Activated naive CD4-positive, alpha-beta T cell treated with anti-CD3 and anti-CD28 coated beads for 36 hours (primary cell): ENCODE measurements at regions of chr3 and their contacts with region 1.

Region 1: DNA sequence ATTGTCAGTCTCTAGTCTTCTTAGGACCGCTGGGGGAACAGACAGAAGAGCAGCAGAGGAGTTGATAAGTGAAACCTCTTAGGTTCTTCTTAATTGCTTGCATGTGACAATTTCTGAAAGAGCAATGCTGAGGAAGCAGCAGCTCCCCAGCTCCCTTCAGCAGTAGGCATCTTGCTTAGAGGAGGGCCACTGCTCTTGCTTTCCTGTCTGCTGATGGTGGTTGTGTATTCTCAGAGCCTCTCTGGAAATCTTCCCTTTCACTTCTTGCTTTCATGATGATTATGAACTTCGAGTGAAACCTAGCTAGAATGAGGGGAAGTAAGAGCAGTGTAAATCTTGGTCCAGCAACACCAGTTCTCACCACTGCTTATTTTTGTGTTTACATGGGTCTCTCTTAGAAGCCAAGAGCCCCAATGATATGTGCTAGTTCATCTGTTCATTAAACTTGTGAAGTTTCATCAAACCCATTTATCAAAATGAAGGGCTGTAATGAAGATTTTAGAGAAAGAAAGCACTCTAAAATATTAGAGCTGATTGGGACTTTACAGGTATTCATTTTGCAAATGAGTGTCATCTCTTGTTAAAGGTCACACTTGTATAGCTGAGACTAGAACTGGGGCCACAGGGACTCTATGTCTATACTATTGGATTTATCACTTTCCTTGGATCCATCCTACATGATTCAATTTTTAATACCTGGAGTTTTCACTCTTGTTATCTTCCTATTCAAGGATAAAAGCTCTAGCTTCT is 246.7 kb downstream of the LPP start:
- DNase-seq: peak; percentile 60
- H3K4me3 Mint-ChIP-seq: no peak overlapping the region
- H3K27ac Mint-ChIP-seq: peak overlapping the region; percentile 43
- H3K4me1 Mint-ChIP-seq: peaks cover 70% of the 10 kb centered on the region
- H3K27me3 Mint-ChIP-seq: no peaks in the 10 kb centered on the region

Region 2: DNA sequence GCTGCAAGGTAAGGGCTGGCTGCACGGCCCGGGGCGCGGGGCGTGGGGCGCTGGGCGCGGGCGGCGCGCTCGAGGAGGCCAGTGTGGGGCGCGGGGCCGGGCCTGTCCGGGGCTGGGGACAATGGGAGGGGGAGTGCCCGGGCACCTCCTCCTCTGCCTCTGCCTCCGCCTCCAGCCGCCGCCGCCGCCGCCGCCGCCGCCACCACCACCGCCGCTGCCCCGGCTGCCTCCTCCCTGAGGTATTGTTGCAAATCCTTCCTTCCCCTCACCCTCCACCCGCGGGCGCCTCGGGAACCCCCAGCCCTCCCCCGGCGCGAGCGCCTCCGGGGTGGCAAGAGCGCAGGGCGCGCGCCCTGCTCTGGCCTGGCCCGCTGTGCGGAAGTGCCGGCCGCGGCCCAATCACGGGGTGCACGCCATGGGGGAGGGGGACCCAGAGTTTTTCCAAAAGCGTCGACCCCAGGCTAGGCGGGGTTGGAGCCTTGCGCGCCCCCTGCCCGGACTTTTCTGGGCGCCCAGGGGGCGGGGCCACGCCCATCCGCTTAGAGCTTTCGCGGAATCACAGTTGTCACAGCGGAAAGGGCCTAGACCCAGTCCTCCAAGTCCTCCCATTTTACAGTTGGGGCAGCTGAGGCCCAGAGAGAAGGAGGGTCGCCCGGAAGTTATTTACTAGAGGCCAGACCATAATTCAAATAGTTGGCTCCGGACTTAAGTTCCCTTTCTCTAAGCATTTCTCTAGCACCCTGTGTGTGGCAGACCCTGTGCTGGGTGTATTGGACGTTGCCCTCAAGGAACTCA is 246.5 kb before region 1 on chr3 and contains the start of gene LPP:
- CTCF ChIA-PET with region 1: no interaction called
- intact Hi-C with region 1: loop called (anchors 5 kb)
- DNase-seq: peak; percentile 88
- H3K4me3 Mint-ChIP-seq: peak within 1 kb of the TSS; percentile 83
- H3K27ac Mint-ChIP-seq: peak within 1 kb of the TSS; percentile 89
- H3K4me1 Mint-ChIP-seq: peaks cover 54% of the 10 kb centered on the region
- H3K27me3 Mint-ChIP-seq: no peaks in the 10 kb centered on the region
- total RNA-seq, gene LPP: 27.5 to 31.8 TPM

Region 3: GRCh38 chr3:188362405-188362831 is 38.3 kb before region 1 on chr3:
- CTCF ChIA-PET with region 1: no interaction called
- intact Hi-C with region 1: loop called (anchors 1 kb)
- DNase-seq: no peak
- H3K4me3 Mint-ChIP-seq: no peak overlapping the region
- H3K27ac Mint-ChIP-seq: no peak overlapping the region
- H3K4me1 Mint-ChIP-seq: peaks cover 40% of the 10 kb centered on the region
- H3K27me3 Mint-ChIP-seq: no peaks in the 10 kb centered on the region

Region 4: DNA sequence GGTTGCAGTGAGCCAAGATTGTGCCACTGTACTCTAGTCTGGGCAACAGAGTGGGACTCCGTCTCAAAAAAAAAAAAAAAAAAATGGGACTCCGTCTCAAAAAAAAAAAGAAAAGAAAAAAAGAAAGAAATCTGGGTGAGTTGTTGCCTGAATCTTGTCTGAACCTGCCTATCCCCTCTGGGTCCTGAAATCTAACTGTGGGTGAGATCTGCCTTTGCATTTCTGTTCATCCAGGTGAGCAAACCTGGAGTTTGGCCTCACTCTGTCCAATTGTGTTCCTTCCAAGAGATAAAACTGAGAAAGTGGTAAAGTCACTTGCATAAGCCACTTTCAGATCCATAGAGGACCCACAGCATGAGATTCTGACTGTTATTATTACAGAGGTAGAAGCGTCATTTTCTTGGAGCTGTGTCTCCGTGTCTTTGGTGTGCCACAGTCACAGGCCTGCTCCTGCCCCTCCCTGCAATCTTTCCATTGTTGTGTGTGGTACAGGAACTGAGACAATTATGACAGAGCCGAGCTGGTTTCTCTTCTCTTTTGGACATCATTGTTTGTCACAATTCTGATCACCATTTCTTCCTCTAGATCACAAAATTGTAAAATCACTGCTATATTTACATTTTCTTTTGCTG is 10.8 kb before region 1 on chr3:
- CTCF ChIA-PET with region 1: no interaction called
- intact Hi-C with region 1: loop called (anchors 1 kb)
- DNase-seq: peak; percentile 85
- H3K4me3 Mint-ChIP-seq: no peak overlapping the region
- H3K27ac Mint-ChIP-seq: peak overlapping the region; percentile 67
- H3K4me1 Mint-ChIP-seq: peaks cover 39% of the 10 kb centered on the region
- H3K27me3 Mint-ChIP-seq: no peaks in the 10 kb centered on the region

Region 5: DNA sequence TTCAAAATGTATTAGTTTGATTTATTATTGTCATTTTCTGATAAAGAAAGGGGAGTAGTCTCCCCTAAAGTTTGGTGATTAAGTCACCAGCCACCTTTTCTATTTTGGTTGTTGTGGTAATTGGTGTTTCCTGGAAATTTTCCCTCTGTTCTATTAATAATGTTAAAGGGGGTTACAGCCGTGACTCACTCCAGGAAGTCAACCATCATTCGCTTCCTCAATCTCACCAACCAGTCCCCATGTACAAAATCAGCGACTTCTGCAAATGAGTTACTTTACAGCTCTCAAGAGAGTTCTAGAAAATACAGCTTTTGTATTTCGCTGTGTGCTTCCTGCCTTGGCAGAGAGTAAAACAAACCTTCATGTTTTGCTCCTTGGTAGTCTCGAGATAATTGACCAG is 38.4 kb after region 1 on chr3:
- CTCF ChIA-PET with region 1: no interaction called
- intact Hi-C with region 1: loop called (anchors 1 kb)
- DNase-seq: peak; percentile 51
- H3K4me3 Mint-ChIP-seq: no peak overlapping the region
- H3K27ac Mint-ChIP-seq: peak overlapping the region; percentile 61
- H3K4me1 Mint-ChIP-seq: peaks cover 38% of the 10 kb centered on the region
- H3K27me3 Mint-ChIP-seq: no peaks in the 10 kb centered on the region

Region 6: DNA sequence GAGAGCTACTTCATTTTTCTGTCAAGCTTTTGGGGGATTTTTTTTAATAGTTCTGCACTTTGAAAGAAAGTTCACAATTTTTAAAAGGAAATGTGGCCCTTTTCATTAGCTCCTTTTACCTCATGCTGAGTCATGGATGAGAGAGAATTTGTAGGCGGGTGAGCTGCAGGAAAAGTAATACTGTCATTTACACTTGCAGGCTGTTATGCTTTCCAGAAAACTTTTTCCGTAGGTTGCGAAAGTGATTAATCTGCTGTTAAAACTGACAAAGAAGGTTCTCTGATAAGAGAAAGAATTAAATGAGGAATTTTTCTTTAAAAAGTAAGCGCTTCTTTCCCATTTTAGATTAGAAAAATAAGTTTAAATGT is 183.5 kb after region 1 on chr3:
- CTCF ChIA-PET with region 1: interaction called, 4 read pairs
- intact Hi-C with region 1: loop called (anchors 5 kb)
- DNase-seq: peak; percentile 61
- H3K4me3 Mint-ChIP-seq: no peak overlapping the region
- H3K27ac Mint-ChIP-seq: no peak overlapping the region
- H3K4me1 Mint-ChIP-seq: peaks cover 15% of the 10 kb centered on the region
- H3K27me3 Mint-ChIP-seq: no peaks in the 10 kb centered on the region